Astrocyte of the cerebellum (primary cell): ENCODE measurements at regions of chr17 and their contacts with region 1.

Region 1: GRCh38 chr17:32285746-32286517 is 20.3 kb downstream of the RHBDL3 start:
- DNase-seq: no peak
- H3K4me3 ChIP-seq: no peak overlapping the region
- CTCF ChIP-seq: no peak

Region 2: DNA sequence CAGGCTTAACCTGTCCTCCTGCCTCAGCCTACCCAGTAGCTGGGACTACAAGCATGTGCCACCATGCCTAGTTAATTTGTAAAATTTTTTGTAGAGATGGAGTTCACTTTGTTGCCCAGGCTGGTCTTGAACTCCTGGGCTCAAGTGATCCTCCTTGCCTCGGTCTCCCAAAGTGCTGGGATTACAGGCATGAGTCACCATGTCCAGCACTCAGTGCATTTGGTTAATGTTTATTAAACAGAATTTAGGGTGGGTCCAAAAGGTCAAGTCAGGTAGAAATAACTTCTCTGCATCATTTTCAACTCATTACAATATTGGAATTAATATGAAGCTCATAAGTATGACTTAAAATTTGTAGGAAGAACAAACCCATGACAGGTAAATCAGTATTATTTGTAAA is 87.9 kb before region 1 on chr17:
- in situ Hi-C with region 1: loop called (anchors 5 kb)
- DNase-seq: no peak
- H3K4me3 ChIP-seq: no peak overlapping the region
- CTCF ChIP-seq: no peak

Region 3: DNA sequence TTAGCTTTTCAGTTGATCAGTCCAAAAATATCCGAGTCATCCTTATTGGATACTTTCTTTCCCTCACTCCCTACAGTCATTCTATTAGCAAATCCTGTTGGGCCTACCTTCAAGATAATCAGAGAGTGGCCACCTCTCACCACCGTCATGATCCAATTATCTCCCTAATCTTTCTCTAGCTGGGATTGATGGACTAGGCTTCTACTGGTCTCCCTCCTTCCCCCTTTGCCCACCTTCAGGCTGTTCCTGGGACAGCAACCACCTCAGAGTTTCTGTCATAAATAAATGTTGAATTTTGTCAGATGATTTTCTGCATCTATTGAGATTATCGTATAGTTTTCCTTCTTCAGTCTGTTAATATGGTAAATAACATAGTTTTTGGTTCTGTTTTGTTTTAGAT is 36.5 kb before region 1 on chr17:
- in situ Hi-C with region 1: no loop called
- DNase-seq: no peak
- H3K4me3 ChIP-seq: no peak overlapping the region
- CTCF ChIP-seq: no peak

Region 4: GRCh38 chr17:32386844-32387243 is 100.9 kb after region 1 on chr17:
- in situ Hi-C with region 1: no loop called
- DNase-seq: no peak
- H3K4me3 ChIP-seq: no peak overlapping the region
- CTCF ChIP-seq: no peak